CD4-positive, alpha-beta memory T cell (primary cell): ENCODE measurements at regions of chr17 and their contacts with region 1.

Region 1: GRCh38 chr17:75795820-75796607 is 11.4 kb downstream of the UNK start:
- DNase-seq: no peak
- H3K4me3 ChIP-seq: no peak overlapping the region
- H3K4me3 Mint-ChIP-seq: no peak overlapping the region
- H3K27ac ChIP-seq: no peak overlapping the region
- H3K27ac Mint-ChIP-seq: peak overlapping the region in 2 of 7 donors; percentile 10 to 80
- H3K4me1 ChIP-seq: peaks cover 10% of the 10 kb centered on the region
- H3K4me1 Mint-ChIP-seq: peaks cover 9 to 22% (median 19%) of the 10 kb centered on the region in 4 donors
- H3K27me3 ChIP-seq: no peaks in the 10 kb centered on the region
- H3K27me3 Mint-ChIP-seq: no peaks in the 10 kb centered on the region

Region 2: GRCh38 chr17:75816674-75817073 is 20.7 kb after region 1 on chr17:
- CTCF ChIA-PET with region 1: no interaction called
- POLR2A ChIA-PET with region 1: no interaction called
- intact Hi-C with region 1: loop called (anchors 1 kb)
- DNase-seq: no peak
- H3K4me3 ChIP-seq: no peak overlapping the region
- H3K4me3 Mint-ChIP-seq: no peak overlapping the region
- H3K27ac ChIP-seq: no peak overlapping the region
- H3K27ac Mint-ChIP-seq: no peak overlapping the region
- H3K4me1 ChIP-seq: peaks cover 6% of the 10 kb centered on the region
- H3K4me1 Mint-ChIP-seq: peaks cover 5 to 10% (median 9%) of the 10 kb centered on the region in 4 donors
- H3K27me3 ChIP-seq: no peaks in the 10 kb centered on the region
- H3K27me3 Mint-ChIP-seq: no peaks in the 10 kb centered on the region

Region 3: GRCh38 chr17:75878174-75878998 is 82.4 kb after region 1 on chr17 and contains the start of gene TRIM47:
- CTCF ChIA-PET with region 1: no interaction called
- POLR2A ChIA-PET with region 1: no interaction called
- intact Hi-C with region 1: no loop called
- DNase-seq: peak in 1 of 5 donors; percentile 14
- H3K4me3 ChIP-seq: peak within 1 kb of the TSS; percentile 61 to 76
- H3K4me3 Mint-ChIP-seq: peak within 1 kb of the TSS; percentile 89 to 95 (median 91)
- H3K27ac ChIP-seq: peak within 1 kb of the TSS; percentile 56
- H3K27ac Mint-ChIP-seq: peak within 1 kb of the TSS; percentile 88 to 97 (median 94)
- H3K4me1 ChIP-seq: peaks cover 58% of the 10 kb centered on the region
- H3K4me1 Mint-ChIP-seq: peaks cover 24 to 56% (median 40%) of the 10 kb centered on the region in 4 donors
- H3K27me3 ChIP-seq: no peaks in the 10 kb centered on the region
- H3K27me3 Mint-ChIP-seq: no peaks in the 10 kb centered on the region
- total RNA-seq, gene TRIM47: 17.5 to 22.6 TPM